ENCODE measurements at regions of chr17 and their contacts with region 1.

Region 1: GRCh38 chr17:39094607-39095308 is 56.7 kb downstream of the PLXDC1 start:
- DNase-seq: peak; percentile 25 to 80 (median 57)
- ATAC-seq: peak; percentile 59
- H3K4me3 ChIP-seq: peak overlapping the region; percentile 15 to 27
- H3K4me3 Mint-ChIP-seq: peak overlapping the region; percentile 71
- H3K27ac ChIP-seq: peak overlapping the region; percentile 44 to 70
- H3K27ac Mint-ChIP-seq: peak overlapping the region; percentile 92
- H3K4me1 ChIP-seq: peaks cover 87% of the 10 kb centered on the region
- H3K4me1 Mint-ChIP-seq: peaks cover 85% of the 10 kb centered on the region
- H3K27me3 ChIP-seq: no peaks in the 10 kb centered on the region
- H3K27me3 Mint-ChIP-seq: no peaks in the 10 kb centered on the region
- CTCF ChIP-seq: no peak

Region 2: GRCh38 chr17:38444151-38444550 is 650.6 kb before region 1 on chr17:
- CTCF ChIA-PET with region 1: no interaction called
- POLR2A ChIA-PET with region 1: no interaction called
- intact Hi-C with region 1: no loop called
- DNase-seq: peak; percentile 11 to 67 (median 54)
- ATAC-seq: peak; percentile 93
- H3K4me3 ChIP-seq: no peak overlapping the region
- H3K4me3 Mint-ChIP-seq: no peak overlapping the region
- H3K27ac ChIP-seq: no peak overlapping the region
- H3K27ac Mint-ChIP-seq: no peak overlapping the region
- H3K4me1 ChIP-seq: peaks cover 7% of the 10 kb centered on the region
- H3K4me1 Mint-ChIP-seq: peaks cover 6% of the 10 kb centered on the region
- H3K27me3 ChIP-seq: no peaks in the 10 kb centered on the region
- H3K27me3 Mint-ChIP-seq: peaks cover 2% of the 10 kb centered on the region
- CTCF ChIP-seq: peak; percentile 67

Region 3: GRCh38 chr17:39057701-39058206 is 37.0 kb before region 1 on chr17:
- CTCF ChIA-PET with region 1: interaction called, 4 read pairs
- POLR2A ChIA-PET with region 1: interaction called, 6 read pairs
- intact Hi-C with region 1: loop called in 1 of 2 experiments (anchors 5 kb)
- DNase-seq: no peak
- ATAC-seq: no peak
- H3K4me3 ChIP-seq: no peak overlapping the region
- H3K4me3 Mint-ChIP-seq: peak overlapping the region; percentile 55
- H3K27ac ChIP-seq: no peak overlapping the region
- H3K27ac Mint-ChIP-seq: no peak overlapping the region
- H3K4me1 ChIP-seq: peaks cover 11% of the 10 kb centered on the region
- H3K4me1 Mint-ChIP-seq: peaks cover 16% of the 10 kb centered on the region
- H3K27me3 ChIP-seq: no peaks in the 10 kb centered on the region
- H3K27me3 Mint-ChIP-seq: peaks cover under 1% of the 10 kb centered on the region
- CTCF ChIP-seq: no peak

Region 4: DNA sequence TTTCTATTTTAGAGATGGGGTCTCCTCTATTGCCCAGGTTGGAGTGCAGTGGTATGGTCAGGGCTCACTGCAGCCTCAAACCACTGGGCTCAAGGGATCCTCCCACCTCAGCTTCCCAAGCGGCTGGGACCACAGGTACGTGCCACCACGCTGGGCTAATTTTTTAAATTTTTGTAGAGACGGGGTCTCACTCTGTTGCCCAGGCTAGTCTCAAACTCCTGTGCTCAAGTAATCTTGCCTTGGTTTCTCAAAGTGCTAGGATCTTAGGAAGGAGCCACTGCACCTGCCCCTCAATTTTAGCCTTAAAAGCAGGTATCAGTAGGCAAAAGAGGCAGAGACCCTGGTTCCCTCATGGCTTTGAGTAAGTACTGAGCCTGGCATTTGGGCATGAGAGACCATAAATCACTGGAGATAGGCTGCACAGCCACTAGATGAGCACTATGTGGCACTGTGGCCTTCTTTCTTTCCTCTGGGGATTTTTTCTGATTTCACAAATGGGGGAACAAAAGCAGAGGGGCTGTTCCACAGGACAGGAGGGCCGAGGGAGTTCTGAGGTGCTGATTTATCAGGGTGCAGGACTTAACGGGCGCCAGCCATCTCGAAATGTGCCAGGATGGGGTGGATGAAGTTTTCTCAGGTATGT is 25.5 kb before region 1 on chr17:
- CTCF ChIA-PET with region 1: interaction called, 13 read pairs
- POLR2A ChIA-PET with region 1: interaction called, 4 read pairs
- intact Hi-C with region 1: no loop called
- DNase-seq: peak in 7 of 9 experiments; percentile 2 to 76 (median 32)
- ATAC-seq: peak; percentile 96
- H3K4me3 ChIP-seq: no peak overlapping the region
- H3K4me3 Mint-ChIP-seq: no peak overlapping the region
- H3K27ac ChIP-seq: no peak overlapping the region
- H3K27ac Mint-ChIP-seq: peak overlapping the region; percentile 57
- H3K4me1 ChIP-seq: no peaks in the 10 kb centered on the region
- H3K4me1 Mint-ChIP-seq: peaks cover 5% of the 10 kb centered on the region
- H3K27me3 ChIP-seq: no peaks in the 10 kb centered on the region
- H3K27me3 Mint-ChIP-seq: no peaks in the 10 kb centered on the region
- CTCF ChIP-seq: peak; percentile 65

Region 5: DNA sequence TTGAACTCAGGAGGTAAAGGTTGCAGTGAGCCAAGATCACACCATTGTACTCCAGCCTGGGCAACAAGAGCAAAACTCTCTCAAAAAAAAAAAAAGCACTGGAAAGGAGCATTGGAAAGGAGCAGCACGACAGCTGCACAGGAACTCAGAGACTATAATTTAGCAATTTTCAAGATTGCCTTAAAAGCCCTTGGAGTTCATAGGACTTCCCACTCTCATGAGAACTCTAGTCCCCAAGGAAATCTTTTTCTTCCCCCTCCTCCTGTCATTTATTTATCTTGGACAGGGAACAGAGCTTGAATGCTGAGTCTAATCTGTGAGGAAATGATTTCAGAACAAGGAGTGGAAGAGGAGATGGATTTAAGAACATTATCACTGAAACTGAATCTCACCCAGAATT is 12.3 kb before region 1 on chr17:
- CTCF ChIA-PET with region 1: interaction called, 10 read pairs
- POLR2A ChIA-PET with region 1: no interaction called
- intact Hi-C with region 1: no loop called
- DNase-seq: no peak
- ATAC-seq: no peak
- H3K4me3 ChIP-seq: no peak overlapping the region
- H3K4me3 Mint-ChIP-seq: no peak overlapping the region
- H3K27ac ChIP-seq: no peak overlapping the region
- H3K27ac Mint-ChIP-seq: no peak overlapping the region
- H3K4me1 ChIP-seq: no peaks in the 10 kb centered on the region
- H3K4me1 Mint-ChIP-seq: no peaks in the 10 kb centered on the region
- H3K27me3 ChIP-seq: no peaks in the 10 kb centered on the region
- H3K27me3 Mint-ChIP-seq: no peaks in the 10 kb centered on the region
- CTCF ChIP-seq: no peak

Region 6: DNA sequence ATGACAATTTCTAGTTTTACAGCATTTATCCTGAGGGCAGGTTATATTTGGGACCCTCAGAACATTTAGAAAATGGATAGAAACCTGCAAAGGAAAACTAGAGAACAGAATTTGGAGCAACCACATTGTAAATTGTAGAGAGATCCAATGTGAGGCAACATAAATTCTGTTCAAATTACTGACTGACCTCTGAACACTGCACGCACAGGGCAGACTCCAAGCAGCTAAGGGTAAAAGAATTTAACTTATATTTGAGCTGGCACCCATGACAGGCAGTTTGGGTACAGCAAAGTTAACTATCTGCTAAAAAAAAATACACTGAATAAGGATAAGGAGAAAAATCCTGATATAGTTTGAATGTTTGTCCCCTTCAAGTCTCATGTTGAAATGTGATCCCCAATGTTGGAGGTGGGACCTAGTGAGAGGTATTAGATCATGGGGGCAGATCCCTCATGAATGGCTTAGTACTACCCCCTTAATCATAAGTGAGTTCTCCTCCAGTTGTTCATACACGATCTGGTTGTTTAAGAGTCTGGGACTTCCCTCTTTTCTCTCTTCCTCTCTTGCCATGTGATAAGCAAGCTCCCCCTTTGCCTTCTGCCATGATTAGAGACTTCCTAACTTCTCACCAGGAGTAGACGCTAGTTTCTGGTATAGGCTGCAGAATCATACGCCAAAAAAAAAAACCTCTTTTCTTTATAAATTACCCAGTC is 230.9 kb after region 1 on chr17:
- CTCF ChIA-PET with region 1: no interaction called
- POLR2A ChIA-PET with region 1: no interaction called
- intact Hi-C with region 1: no loop called
- DNase-seq: no peak
- ATAC-seq: no peak
- H3K4me3 ChIP-seq: no peak overlapping the region
- H3K4me3 Mint-ChIP-seq: no peak overlapping the region
- H3K27ac ChIP-seq: no peak overlapping the region
- H3K27ac Mint-ChIP-seq: no peak overlapping the region
- H3K4me1 ChIP-seq: no peaks in the 10 kb centered on the region
- H3K4me1 Mint-ChIP-seq: peaks cover 5% of the 10 kb centered on the region
- H3K27me3 ChIP-seq: no peaks in the 10 kb centered on the region
- H3K27me3 Mint-ChIP-seq: no peaks in the 10 kb centered on the region
- CTCF ChIP-seq: no peak

Region 7: GRCh38 chr17:39517224-39517623 is 422.5 kb after region 1 on chr17:
- CTCF ChIA-PET with region 1: no interaction called
- POLR2A ChIA-PET with region 1: no interaction called
- intact Hi-C with region 1: no loop called
- DNase-seq: no peak
- ATAC-seq: no peak
- H3K4me3 ChIP-seq: no peak overlapping the region
- H3K4me3 Mint-ChIP-seq: no peak overlapping the region
- H3K27ac ChIP-seq: no peak overlapping the region
- H3K27ac Mint-ChIP-seq: no peak overlapping the region
- H3K4me1 ChIP-seq: no peaks in the 10 kb centered on the region
- H3K4me1 Mint-ChIP-seq: no peaks in the 10 kb centered on the region
- H3K27me3 ChIP-seq: no peaks in the 10 kb centered on the region
- H3K27me3 Mint-ChIP-seq: no peaks in the 10 kb centered on the region
- CTCF ChIP-seq: no peak

Measured in CD8-positive, alpha-beta T cell (primary cell).